ENCODE measurements at regions of chrX and their contacts with region 1.

Region 1: GRCh38 chrX:19673375-19674040 is 158.2 kb upstream of the MAP3K15 start:
- DNase-seq: peak in 5 of 10 donors; percentile 33 to 64 (median 49)
- H3K4me3 ChIP-seq: no peak overlapping the region
- H3K27ac ChIP-seq: no peak overlapping the region
- H3K27me3 ChIP-seq: peaks cover 0 to 40% (median 4%) of the 10 kb centered on the region in 45 donors
- CTCF ChIP-seq: no peak

Region 2: DNA sequence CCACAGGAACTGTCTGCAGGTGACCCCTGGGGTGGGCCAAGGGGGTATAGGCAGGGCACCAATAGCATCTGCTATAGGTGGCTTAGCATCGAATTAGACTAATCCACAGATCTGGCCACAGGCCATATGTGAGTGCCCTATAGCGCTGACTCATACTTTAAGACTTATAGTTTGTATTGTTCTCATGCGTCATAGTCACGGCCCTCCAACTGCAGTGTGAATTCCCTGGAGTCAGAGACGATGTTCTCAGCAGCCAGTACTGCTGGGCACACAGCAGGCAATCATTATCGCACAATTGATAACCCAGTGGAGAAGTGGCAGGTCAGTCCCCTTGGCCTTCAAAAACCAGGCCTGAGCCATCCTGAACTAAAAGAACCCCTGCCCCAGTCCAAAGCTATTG is 609.3 kb before region 1 on chrX:
- intact Hi-C with region 1: no loop called
- DNase-seq: no peak
- H3K4me3 ChIP-seq: no peak overlapping the region
- H3K27ac ChIP-seq: no peak overlapping the region
- H3K27me3 ChIP-seq: peaks cover 0 to 51% (median 10%) of the 10 kb centered on the region in 45 donors
- CTCF ChIP-seq: no peak

Region 3: GRCh38 chrX:19517965-19518364 is 155.5 kb before region 1 on chrX:
- intact Hi-C with region 1: no loop called
- DNase-seq: no peak
- H3K4me3 ChIP-seq: no peak overlapping the region
- H3K27ac ChIP-seq: no peak overlapping the region
- H3K27me3 ChIP-seq: peaks cover 0 to 78% (median 16%) of the 10 kb centered on the region in 45 donors
- CTCF ChIP-seq: no peak

Region 4: GRCh38 chrX:19725641-19726040 is 52.1 kb after region 1 on chrX:
- intact Hi-C with region 1: loop called in 1 of 2 experiments (anchors 10 kb)
- DNase-seq: no peak
- H3K4me3 ChIP-seq: no peak overlapping the region
- H3K27ac ChIP-seq: no peak overlapping the region
- H3K27me3 ChIP-seq: peaks cover 0 to 69% (median 16%) of the 10 kb centered on the region in 45 donors
- CTCF ChIP-seq: no peak

Region 5: DNA sequence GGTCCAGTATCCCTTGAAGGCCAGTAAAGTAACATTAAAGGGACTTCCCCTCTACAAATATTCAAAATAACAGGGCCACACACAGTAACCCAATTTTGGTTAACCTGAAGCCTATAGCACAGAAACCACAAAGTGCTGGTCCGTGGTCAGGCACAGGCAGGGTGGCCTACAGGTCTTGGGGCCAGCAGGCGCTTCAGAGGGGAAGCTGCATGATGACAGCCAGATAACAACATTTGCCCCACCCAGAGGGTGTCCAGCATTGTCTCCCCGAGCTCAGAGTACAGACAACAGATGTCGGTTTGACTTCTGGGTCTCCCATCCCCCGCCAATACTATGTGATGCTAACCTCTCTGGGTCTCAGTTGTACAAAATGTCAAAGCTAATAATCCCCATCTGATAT is 162.8 kb after region 1 on chrX:
- intact Hi-C with region 1: no loop called
- DNase-seq: no peak
- H3K4me3 ChIP-seq: no peak overlapping the region
- H3K27ac ChIP-seq: no peak overlapping the region
- H3K27me3 ChIP-seq: peaks cover 0 to 36% (median 3%) of the 10 kb centered on the region in 45 donors
- CTCF ChIP-seq: no peak